ENCODE measurements at regions of chr12 and their contacts with region 1.

Region 1: GRCh38 chr12:120228291-120229070 is 27.6 kb upstream of the RPLP0 start:
- DNase-seq: peak; percentile 87
- H3K4me3 ChIP-seq: peak overlapping the region; percentile 47
- H3K27ac ChIP-seq: peak overlapping the region; percentile 96
- H3K4me1 ChIP-seq: peaks cover 99% of the 10 kb centered on the region
- H3K27me3 ChIP-seq: no peaks in the 10 kb centered on the region
- CTCF ChIP-seq: peak; percentile 98

Region 2: DNA sequence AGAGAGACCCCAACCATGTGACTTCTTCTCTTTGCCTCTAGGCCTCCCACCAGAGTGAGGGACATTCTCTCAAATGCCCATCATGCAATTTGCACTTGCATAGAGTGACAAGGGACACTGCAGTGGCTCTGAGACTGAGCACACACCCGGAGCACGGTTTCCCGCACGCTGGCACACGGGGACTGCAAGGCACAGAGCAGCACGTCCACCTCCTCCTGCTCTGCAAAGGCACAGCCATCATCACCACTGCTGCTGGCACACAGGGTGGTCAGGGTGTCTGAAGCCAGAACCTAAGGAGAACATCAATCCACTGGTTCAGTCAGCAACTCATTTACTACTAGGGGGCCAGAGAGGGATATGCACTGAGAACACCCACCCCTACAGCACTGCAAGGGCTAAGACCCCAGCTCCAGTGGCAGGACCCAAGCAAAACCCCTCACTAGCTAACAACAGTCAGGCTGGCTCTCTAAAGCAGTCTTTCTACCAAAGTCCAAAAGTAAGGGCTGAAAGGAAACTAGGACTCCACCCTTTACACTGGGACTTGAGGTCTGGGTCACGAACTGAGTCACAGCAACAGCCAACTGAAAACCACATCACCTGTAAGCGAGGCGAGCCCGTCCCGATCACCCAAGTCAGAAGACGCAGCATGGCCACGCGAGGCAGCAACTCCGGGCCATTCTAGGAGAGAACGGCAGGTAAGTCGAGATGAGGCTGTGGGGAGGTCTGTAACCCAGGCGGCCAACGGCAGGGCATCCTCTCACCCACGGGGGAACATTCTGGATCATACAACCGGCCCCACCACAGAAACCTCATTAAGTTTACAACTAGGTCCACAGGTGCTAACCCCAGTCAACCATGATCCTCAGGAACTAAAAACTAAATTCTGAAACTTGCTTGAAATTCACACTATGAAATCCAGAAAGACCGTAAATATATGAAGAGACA is 71.9 kb before region 1 on chr12:
- intact Hi-C with region 1: no loop called
- DNase-seq: no peak
- H3K4me3 ChIP-seq: no peak overlapping the region
- H3K27ac ChIP-seq: no peak overlapping the region
- H3K4me1 ChIP-seq: no peaks in the 10 kb centered on the region
- H3K27me3 ChIP-seq: no peaks in the 10 kb centered on the region
- CTCF ChIP-seq: no peak

Region 3: GRCh38 chr12:120265473-120266179 is 37.1 kb after region 1 on chr12 and contains the start of gene PXN:
- intact Hi-C with region 1: loop called (anchors 5 kb)
- DNase-seq: peak; percentile 89
- H3K4me3 ChIP-seq: peak within 1 kb of the TSS; percentile 97
- H3K27ac ChIP-seq: peak within 1 kb of the TSS; percentile 96
- H3K4me1 ChIP-seq: peaks cover 53% of the 10 kb centered on the region
- H3K27me3 ChIP-seq: no peaks in the 10 kb centered on the region
- CTCF ChIP-seq: peak; percentile 90
- total RNA-seq, gene PXN: 59.8 TPM